Left colon (tissue), 2 donors: ENCODE measurements at regions of chr20 and their contacts with region 1.

Region 1: DNA sequence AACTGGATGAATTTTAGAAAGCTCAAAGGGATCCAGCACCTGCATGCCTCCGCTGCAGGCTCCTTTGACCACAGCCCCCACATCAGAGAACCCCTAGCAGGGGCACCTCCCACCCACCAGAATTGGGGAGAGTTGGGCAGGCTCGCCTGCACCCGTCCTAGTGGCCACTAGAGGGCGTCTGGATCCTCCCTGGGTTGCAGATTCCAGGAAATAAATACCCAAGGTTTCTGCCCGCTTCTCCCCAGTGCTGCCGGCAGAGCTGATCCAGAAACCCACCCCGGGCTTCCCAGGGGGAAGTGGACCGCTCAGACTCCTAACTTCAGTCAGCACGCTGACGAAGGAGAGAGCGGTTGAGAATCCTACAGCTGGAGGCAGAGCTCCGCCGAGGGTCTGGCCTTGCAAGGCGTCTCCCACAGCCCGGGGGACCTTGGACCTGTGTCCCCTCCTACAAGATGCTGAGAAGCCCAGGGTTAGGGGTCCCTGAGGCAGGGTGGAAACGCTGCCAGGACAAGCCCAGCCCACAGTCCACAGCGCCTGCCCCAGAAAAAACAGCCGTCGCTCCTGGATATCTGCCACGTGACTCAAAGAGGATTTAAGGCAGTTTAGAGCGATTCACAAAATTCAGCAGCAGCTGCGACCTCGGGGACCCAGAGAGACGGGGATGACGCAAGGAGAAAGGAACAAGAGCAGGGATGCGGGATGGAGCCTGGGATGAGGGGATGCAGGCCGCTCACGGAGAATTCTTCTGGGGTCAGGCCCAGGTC is 32.6 kb upstream of the PHACTR3 start:
- DNase-seq: peak in 1 of 2 donors; percentile 65
- ATAC-seq: peak; percentile 74

Region 2: GRCh38 chr20:59643615-59644061 is 71.9 kb after region 1 on chr20:
- intact Hi-C with region 1: no loop called
- DNase-seq: no peak
- ATAC-seq: no peak

Region 3: GRCh38 chr20:59751056-59751688 is 179.4 kb after region 1 on chr20:
- intact Hi-C with region 1: loop called (anchors 5 to 10 kb)
- DNase-seq: peak; percentile 51 to 70
- ATAC-seq: peak; percentile 81